Right ventricle myocardium inferior (tissue), 1 donor: ENCODE measurements at regions of chr19 and their contacts with region 1.

Region 1: DNA sequence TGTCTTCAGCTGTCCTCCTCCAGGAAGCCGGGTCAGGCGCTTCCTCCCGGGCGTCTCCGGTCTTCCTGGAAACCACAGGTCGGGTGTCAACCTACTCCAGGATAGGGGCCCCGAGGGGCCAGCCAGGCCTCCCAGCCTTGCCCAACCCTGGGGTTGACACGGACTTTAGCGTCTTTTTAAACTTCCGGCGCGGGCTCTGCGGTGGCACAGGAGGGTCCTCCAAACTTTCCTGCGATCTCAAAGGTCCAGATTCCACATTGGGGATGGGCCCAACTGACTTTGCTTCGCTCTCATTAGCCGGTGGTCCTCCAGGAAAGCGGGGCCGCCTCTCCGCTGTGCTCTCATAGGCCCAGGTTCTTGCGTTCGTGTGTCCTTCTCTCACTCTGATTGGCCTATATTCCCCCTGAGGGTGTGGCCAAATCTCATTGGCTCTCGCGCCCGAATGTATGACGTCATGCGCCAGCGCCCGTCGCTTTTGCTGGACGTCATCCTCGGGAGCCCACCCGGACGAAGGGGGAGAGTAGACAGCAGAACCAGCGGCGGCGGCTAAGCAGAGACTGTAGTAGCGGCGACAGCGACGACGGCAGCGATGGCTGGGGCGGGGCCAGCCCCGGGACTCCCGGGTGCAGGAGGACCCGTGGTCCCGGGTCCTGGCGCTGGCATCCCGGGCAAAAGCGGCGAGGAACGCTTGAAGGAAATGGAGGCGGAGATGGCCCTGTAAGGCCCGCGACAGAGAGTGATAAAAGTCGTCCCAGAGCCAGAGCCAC is at the start of gene RBM42:
- DNase-seq: peak; percentile 97
- ATAC-seq: peak; percentile 100
- total RNA-seq, gene RBM42: 51.5 TPM

Region 2: GRCh38 chr19:35533822-35534521 is 94.8 kb before region 1 on chr19:
- intact Hi-C with region 1: no loop called
- DNase-seq: no peak
- ATAC-seq: no peak

Region 3: GRCh38 chr19:35545001-35545911 is 83.5 kb before region 1 on chr19 and contains the start of gene TMEM147:
- intact Hi-C with region 1: loop called (anchors 5 kb)
- DNase-seq: peak; percentile 98
- ATAC-seq: peak; percentile 98
- total RNA-seq, gene TMEM147: 84.6 TPM